HepG2 (cell line): ENCODE measurements at regions of chr1 and their contacts with region 1.

Region 1: DNA sequence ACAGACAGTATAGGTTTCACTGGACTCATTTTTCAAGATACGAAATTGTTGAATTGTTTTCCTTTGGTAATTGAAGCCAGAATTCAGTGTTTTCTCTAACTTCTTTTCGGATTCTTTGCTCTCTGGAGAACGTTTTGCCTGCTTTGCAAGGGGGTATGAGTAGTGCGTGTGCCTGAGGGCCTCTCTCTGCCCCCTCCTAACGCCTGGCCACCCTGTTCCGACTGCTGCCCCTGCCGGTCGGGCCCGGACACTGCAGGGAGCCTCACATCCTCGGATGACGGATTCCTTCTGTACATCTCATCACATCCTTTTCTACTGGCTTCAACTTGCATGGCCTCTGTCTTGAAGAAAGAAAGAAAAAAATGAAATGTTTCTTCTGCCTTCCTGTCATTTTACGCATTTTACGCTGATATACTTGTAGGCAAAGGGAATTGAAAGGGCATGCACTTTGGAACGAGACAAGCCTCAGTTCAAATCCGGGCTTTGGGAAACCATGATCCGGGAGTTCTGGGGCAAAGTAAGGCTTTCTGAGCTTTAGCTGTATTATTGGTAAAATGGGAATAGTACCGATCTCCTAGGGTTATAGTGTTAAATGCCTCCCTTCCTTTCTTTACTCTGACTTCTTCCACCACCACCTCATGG is 65.1 kb downstream of the DISC1 start:
- DNase-seq: peak; percentile 31
- ATAC-seq: peak; percentile 94
- H3K4me3 ChIP-seq: peak overlapping the region in 1 of 3 experiments; percentile 25; a peak in 1 of 6 replicates
- H3K27ac ChIP-seq: no peak overlapping the region
- H3K4me1 ChIP-seq: peaks cover 29% of the 10 kb centered on the region
- H3K27me3 ChIP-seq: no peaks in the 10 kb centered on the region
- CTCF ChIP-seq: peak; percentile 83
- EP300 ChIP-seq: no peak
- POLR2A ChIP-seq: no peak
- RAD21 ChIP-seq: peak; percentile 37; the same call in 1 of the 2 replicates

Region 2: GRCh38 chr1:231603598-231604275 is 88.0 kb before region 1 on chr1:
- CTCF ChIA-PET with region 1: no interaction called
- POLR2A ChIA-PET with region 1: no interaction called
- in situ Hi-C with region 1: no loop called
- intact Hi-C with region 1: loop called (anchors 1 kb)
- DNase-seq: peak; percentile 69
- ATAC-seq: peak; percentile 88
- H3K4me3 ChIP-seq: peak overlapping the region; percentile 55 to 77 (median 75)
- H3K27ac ChIP-seq: peak overlapping the region; percentile 9
- H3K4me1 ChIP-seq: peaks cover 12% of the 10 kb centered on the region; the same call in 1 of the 2 replicates
- H3K27me3 ChIP-seq: no peaks in the 10 kb centered on the region
- CTCF ChIP-seq: peak; percentile 65
- EP300 ChIP-seq: no peak
- POLR2A ChIP-seq: no peak
- RAD21 ChIP-seq: peak; percentile 61

Region 3: GRCh38 chr1:231626535-231626945 is 65.2 kb before region 1 on chr1 and contains the start of gene DISC1:
- CTCF ChIA-PET with region 1: no interaction called
- POLR2A ChIA-PET with region 1: no interaction called
- in situ Hi-C with region 1: no loop called
- intact Hi-C with region 1: loop called (anchors 2 kb)
- DNase-seq: peak; percentile 80
- ATAC-seq: peak; percentile 79
- H3K4me3 ChIP-seq: peak within 1 kb of the TSS; percentile 78 to 96 (median 85)
- H3K27ac ChIP-seq: peak within 1 kb of the TSS; percentile 57
- H3K4me1 ChIP-seq: peaks cover 37% of the 10 kb centered on the region
- H3K27me3 ChIP-seq: no peaks in the 10 kb centered on the region; a peak in 2 of 5 replicates
- CTCF ChIP-seq: no peak
- EP300 ChIP-seq: peak in 1 of 2 experiments; percentile 39; a peak in 1 of 4 replicates
- POLR2A ChIP-seq: peak in 1 of 2 experiments; percentile 48; a peak in 1 of 4 replicates
- RAD21 ChIP-seq: no peak
- total RNA-seq, gene DISC1: 3.1 and 4.2 TPM in 2 replicates

Region 4: DNA sequence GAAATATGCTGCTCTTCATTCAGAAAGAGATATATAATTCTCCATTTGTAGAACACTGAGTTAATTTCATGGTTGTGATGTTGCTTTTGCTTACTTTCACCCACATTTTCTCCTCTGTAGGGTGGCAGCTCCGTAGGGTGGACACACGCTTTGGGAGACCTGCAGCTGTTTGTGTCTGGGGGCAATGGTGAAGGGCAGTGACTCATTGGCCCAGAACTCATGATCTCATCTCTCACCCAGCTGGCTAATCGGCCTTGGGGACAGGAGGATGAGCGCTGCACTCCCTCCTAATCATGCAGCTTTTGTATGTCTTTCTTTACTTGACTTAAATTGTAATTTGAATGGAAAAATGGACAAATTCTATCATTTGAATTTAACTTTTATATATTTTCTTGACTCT is 55.6 kb before region 1 on chr1:
- CTCF ChIA-PET with region 1: no interaction called
- POLR2A ChIA-PET with region 1: no interaction called
- in situ Hi-C with region 1: no loop called
- intact Hi-C with region 1: loop called (anchors 1 kb)
- DNase-seq: peak; percentile 67
- ATAC-seq: peak; percentile 85
- H3K4me3 ChIP-seq: no peak overlapping the region
- H3K27ac ChIP-seq: no peak overlapping the region
- H3K4me1 ChIP-seq: peaks cover 24% of the 10 kb centered on the region
- H3K27me3 ChIP-seq: no peaks in the 10 kb centered on the region
- CTCF ChIP-seq: no peak
- EP300 ChIP-seq: no peak
- POLR2A ChIP-seq: no peak
- RAD21 ChIP-seq: no peak

Region 5: DNA sequence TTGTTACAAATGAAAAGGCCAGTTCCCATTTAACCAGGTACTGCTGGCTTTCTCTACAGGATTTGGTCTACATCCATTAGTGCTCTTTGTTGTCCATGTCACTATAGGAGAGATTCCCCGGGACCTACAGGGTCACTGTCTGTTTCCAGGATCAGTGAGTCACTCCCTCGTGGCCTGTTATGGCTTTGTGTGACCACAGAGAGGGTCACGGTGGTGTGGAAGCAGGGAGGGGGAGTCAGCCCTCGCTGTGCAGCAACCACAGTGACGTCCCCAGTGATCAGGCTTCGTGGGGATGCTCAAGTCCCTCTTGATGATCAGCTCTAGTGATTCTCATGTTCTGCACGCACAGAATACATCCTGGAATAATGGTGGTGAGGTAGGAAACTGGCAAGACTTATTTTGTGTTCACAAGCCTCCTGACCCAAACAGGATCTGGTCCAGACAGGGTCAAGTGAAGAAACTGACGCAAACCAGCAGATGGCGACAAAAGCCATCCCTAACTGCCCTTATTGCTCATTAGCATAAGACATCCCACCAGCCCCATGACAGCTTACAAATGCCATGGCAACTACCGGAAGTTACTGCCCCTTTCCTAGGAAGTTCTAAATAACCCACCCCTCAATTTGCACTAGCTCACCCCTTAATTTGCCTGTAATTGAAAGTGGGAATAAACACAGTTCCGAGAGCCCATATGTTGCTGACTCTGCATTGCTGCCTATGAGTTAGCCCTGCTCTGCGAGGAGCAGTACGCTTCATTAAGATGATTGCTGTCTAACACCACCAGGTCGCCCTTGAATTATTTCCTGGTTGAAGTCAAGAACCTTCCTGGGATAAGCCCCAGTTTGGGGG is 33.4 kb after region 1 on chr1:
- CTCF ChIA-PET with region 1: no interaction called
- POLR2A ChIA-PET with region 1: no interaction called
- in situ Hi-C with region 1: no loop called
- intact Hi-C with region 1: loop called (anchors 2 kb)
- DNase-seq: peak; percentile 57
- ATAC-seq: peak; percentile 92
- H3K4me3 ChIP-seq: no peak overlapping the region
- H3K27ac ChIP-seq: no peak overlapping the region
- H3K4me1 ChIP-seq: 0 out of 2 replicates have a peak, but pooled peaks cover 6% of the 10 kb centered on the region
- H3K27me3 ChIP-seq: no peaks in the 10 kb centered on the region
- CTCF ChIP-seq: peak; percentile 66
- EP300 ChIP-seq: no peak
- POLR2A ChIP-seq: no peak
- RAD21 ChIP-seq: peak; percentile 37; the same call in 1 of the 2 replicates